Dendritic cell treated with granulocyte-macrophage colony-stimulating factor and Interleukin-4, amounts not matched to agents 40 ng/mL and 50 ng/mL, for 4 days (primary cell): ENCODE measurements at regions of chr11 and their contacts with region 1.

Region 1: GRCh38 chr11:17354601-17354991 is 3.0 kb downstream of the NCR3LG1 start:
- H3K4me3 Mint-ChIP-seq: no peak overlapping the region
- H3K27ac Mint-ChIP-seq: no peak overlapping the region
- H3K4me1 Mint-ChIP-seq: peaks cover 28% of the 10 kb centered on the region
- H3K27me3 Mint-ChIP-seq: peaks cover 1% of the 10 kb centered on the region

Region 2: DNA sequence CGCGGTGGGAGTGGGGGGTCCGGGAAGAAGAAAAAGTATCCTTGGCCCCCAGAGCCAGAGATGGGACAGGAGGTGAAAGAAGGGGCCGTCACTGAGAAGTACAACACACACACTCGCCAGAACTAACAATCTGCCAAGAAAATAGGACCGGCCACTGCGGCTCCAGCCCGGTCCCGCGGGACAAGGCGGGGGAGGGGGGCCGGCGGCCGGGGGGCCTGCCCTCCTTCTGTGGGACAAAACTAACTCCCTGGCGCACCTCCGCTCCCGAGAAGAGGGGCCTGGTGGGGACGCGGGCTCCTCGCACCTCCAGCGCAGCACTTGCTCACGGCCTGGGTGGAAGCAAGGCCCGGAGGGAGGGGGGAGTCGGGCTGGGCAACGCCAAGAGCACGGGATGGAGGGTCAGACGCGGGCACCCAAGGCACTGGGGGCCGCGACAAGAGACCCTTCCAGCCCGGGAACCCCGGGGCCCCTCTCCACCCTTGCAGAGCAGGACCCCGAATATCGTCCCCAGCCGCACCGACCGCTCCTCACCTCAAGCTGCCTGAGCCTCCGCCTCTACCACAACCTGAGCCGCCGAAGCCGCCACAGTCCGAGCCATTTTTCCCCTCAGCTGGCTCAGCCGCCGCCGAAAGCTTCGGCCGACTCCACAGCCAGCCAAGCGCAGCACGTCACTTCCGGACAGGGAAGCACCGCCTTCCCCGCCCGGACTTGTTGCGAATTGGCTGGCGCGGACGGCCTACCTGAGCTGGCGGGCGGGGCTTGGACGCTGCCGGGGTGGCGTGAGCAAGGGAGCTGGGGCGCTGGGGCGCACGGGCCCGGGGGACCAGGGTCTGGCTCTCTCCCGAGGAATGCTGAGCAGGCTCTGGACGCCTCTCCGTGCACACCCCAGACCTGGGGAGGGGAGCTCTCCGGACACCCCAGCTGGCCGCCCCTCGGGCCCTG is 147.0 kb before region 1 on chr11 and contains the start of gene PIK3C2A:
- intact Hi-C with region 1: loop called (anchors 5 kb)
- H3K4me3 Mint-ChIP-seq: peak within 1 kb of the TSS; percentile 88
- H3K27ac Mint-ChIP-seq: peak within 1 kb of the TSS; percentile 93
- H3K4me1 Mint-ChIP-seq: peaks cover 63% of the 10 kb centered on the region
- H3K27me3 Mint-ChIP-seq: no peaks in the 10 kb centered on the region

Region 3: GRCh38 chr11:17230867-17231851 is 123.4 kb before region 1 on chr11:
- intact Hi-C with region 1: loop called (anchors 2 kb)
- H3K4me3 Mint-ChIP-seq: no peak overlapping the region
- H3K27ac Mint-ChIP-seq: no peak overlapping the region
- H3K4me1 Mint-ChIP-seq: peaks cover 14% of the 10 kb centered on the region
- H3K27me3 Mint-ChIP-seq: peaks cover 10% of the 10 kb centered on the region

Region 4: DNA sequence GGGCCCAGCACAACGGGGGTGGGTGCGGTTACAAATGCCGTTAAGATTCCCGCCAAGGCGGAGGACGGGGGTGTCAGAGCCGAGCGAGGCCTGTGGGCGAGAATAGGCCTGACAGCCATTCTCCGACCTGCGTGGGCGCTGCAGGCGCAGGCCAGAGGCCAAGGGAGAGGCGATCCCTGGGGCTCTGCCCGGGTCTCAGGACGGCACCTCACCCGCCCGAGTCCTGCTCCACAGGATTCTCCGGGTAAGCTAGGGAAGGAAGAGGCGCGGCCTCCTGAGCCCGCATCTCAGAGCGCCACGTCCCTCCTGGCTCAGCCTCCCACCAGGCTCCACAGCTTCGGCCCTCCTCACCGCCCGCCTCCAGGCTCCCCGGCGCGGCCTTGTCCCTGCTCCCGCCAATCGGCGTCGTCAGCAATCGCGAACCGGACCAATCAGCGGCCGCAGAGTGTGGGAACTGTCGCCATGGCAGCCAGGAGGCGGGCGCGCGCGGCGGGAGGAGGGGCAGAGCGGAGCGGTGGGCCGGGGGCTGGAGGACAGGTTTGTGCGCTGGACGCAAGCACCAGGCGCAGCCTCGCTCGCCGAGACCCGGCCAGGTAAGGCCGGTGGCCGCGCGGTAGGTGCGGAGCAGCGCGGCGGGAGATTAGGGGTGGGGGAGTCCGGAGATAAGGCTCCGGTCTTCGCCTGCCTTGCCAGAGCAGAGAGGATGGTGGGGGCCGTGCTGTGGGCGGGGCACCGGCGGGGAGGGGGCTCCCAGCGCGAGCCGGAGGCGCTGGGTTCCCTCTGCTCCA is 78.2 kb before region 1 on chr11 and contains the start of gene NUCB2:
- intact Hi-C with region 1: loop called (anchors 5 kb)
- H3K4me3 Mint-ChIP-seq: peak within 1 kb of the TSS; percentile 95
- H3K27ac Mint-ChIP-seq: peak within 1 kb of the TSS; percentile 95
- H3K4me1 Mint-ChIP-seq: peaks cover 37% of the 10 kb centered on the region
- H3K27me3 Mint-ChIP-seq: peaks cover 3% of the 10 kb centered on the region

Region 5: GRCh38 chr11:17389211-17389956 is 34.8 kb after region 1 on chr11:
- intact Hi-C with region 1: no loop called
- H3K4me3 Mint-ChIP-seq: peak overlapping the region; percentile 75
- H3K27ac Mint-ChIP-seq: peak overlapping the region; percentile 69
- H3K4me1 Mint-ChIP-seq: peaks cover 58% of the 10 kb centered on the region
- H3K27me3 Mint-ChIP-seq: peaks cover 35% of the 10 kb centered on the region

Region 6: DNA sequence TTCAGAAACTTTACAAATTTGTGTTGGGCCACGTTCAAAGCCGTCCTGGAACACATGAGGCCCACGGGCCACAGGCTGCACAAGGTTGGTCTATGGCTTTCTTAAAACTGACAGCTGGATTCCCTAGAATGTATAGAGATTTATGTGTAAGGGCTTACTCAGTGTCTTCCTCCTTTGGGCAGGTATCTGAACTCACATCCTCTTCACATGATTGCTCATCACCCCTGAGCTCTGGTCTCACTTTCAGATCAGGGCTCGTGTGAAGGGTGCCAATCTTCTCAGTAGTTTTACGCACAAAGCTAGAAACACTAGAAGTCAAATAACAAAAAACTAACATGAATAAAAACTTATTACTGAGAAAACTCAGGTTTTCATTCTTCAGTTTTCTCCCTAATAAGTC is 940.3 kb after region 1 on chr11:
- intact Hi-C with region 1: no loop called
- H3K4me3 Mint-ChIP-seq: no peak overlapping the region
- H3K27ac Mint-ChIP-seq: peak overlapping the region; percentile 63
- H3K4me1 Mint-ChIP-seq: peaks cover 36% of the 10 kb centered on the region
- H3K27me3 Mint-ChIP-seq: no peaks in the 10 kb centered on the region